Panc1 (cell line): ENCODE measurements at regions of chr7 and their contacts with region 1.

Region 1: DNA sequence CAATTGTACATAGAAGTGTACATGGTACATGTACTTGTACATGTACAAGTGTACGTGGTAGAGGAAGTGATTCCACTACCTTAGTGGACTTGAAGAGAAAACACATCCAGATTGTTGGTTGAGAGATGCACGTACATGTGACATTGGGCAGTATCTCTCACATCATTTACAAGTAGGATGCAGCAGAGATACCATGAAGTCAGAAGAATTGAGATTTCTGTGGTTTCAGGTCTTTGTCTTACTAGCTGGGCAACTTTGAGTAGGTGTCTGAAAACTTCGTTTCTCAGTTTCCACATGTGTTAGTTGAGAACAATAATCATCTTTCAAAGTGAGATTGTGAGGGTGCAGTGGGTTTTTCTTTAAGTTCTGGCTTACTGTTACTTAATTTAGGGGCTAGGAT is 21.5 kb downstream of the CLDN12 start:
- DNase-seq: no peak
- ATAC-seq: no peak
- H3K4me3 ChIP-seq: no peak overlapping the region
- H3K27ac ChIP-seq: no peak overlapping the region
- H3K4me1 ChIP-seq: no peaks in the 10 kb centered on the region
- H3K27me3 ChIP-seq: no peaks in the 10 kb centered on the region
- CTCF ChIP-seq: no peak

Region 2: GRCh38 chr7:90155206-90155605 is 269.5 kb before region 1 on chr7:
- CTCF ChIA-PET with region 1: interaction called, 5 read pairs
- POLR2A ChIA-PET with region 1: no interaction called
- in situ Hi-C with region 1: no loop called
- intact Hi-C with region 1: loop called (anchors 2 kb)
- DNase-seq: no peak
- ATAC-seq: no peak
- H3K4me3 ChIP-seq: peak overlapping the region in 1 of 2 experiments; percentile 37; a peak in 2 of 4 replicates
- H3K27ac ChIP-seq: no peak overlapping the region
- H3K4me1 ChIP-seq: no peaks in the 10 kb centered on the region
- H3K27me3 ChIP-seq: no peaks in the 10 kb centered on the region
- CTCF ChIP-seq: no peak

Region 3: DNA sequence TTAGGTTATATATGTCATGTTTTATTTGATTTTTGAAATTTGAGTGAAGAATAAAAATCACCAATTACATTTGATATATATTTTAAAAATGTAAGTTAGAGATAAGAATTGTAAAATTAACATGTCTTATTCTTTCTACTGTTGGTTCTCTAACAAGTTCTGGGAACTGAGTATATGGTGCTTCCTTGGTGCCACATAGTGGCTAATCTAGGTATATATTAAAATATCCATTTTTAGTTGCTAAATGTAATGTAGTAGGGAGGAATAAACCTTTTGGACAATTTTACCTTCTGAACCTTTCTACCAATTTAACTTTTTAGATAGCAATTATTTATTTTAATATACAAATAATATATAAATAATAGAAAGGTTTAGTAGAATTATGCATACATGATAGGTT is 162.3 kb before region 1 on chr7:
- CTCF ChIA-PET with region 1: interaction called, 4 read pairs
- POLR2A ChIA-PET with region 1: no interaction called
- in situ Hi-C with region 1: no loop called
- intact Hi-C with region 1: loop called (anchors 5 kb)
- DNase-seq: peak; percentile 17
- ATAC-seq: peak; percentile 72; the same call in 1 of the 2 replicates
- H3K4me3 ChIP-seq: no peak overlapping the region
- H3K27ac ChIP-seq: no peak overlapping the region
- H3K4me1 ChIP-seq: no peaks in the 10 kb centered on the region
- H3K27me3 ChIP-seq: peaks cover 3% of the 10 kb centered on the region; the same call in 1 of the 2 replicates
- CTCF ChIP-seq: no peak